AG04450 (cell line): ENCODE measurements at regions of chr13 and their contacts with region 1.

Region 1: GRCh38 chr13:108155185-108156106 is 59.9 kb downstream of the LIG4 start:
- DNase-seq: no peak
- H3K4me3 ChIP-seq: no peak overlapping the region
- H3K27ac ChIP-seq: no peak overlapping the region
- H3K27me3 ChIP-seq: no peaks in the 10 kb centered on the region
- CTCF ChIP-seq: peak; percentile 83

Region 2: DNA sequence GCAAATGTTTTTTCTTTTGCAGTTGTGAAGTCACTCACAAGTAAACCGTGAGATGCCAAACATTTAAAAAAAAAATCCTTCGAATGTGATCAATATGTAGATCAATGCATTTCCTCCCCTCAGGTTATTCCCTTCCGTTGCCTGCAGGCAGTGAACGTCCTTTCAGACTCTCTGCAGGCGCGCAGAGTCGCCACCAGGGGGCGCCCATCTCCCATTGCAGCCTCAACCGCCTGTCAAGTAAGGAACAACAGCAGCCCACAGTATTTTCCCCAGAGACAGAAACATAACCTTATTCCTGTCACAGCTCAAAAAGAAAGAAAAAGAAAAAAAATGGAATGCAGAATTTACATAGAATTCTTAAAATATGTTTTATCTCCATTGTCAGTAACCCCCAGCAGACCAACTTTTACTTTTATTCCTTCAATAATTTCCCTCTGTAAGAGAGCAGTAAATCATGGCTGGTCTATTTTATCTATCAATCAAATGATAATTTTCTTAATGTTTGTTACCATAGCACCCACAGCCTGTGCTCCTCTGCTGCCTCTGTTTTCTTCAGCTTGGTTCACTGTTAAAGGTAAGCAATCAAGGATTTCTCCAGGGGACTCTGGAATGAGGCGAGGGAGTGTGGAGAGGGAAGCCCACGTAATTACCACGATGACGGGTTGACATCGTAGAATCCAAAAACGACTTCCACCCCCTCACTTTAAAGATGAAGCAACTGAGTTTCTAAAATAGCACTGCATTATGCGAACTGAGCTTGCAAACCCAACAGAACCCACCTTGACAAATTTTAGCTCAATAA is 949.9 kb before region 1 on chr13:
- CTCF ChIA-PET with region 1: interaction called, 48 read pairs
- POLR2A ChIA-PET with region 1: no interaction called
- DNase-seq: peak; percentile 26
- H3K4me3 ChIP-seq: no peak overlapping the region
- H3K27ac ChIP-seq: no peak overlapping the region
- H3K27me3 ChIP-seq: no peaks in the 10 kb centered on the region
- CTCF ChIP-seq: peak; percentile 99

Region 3: DNA sequence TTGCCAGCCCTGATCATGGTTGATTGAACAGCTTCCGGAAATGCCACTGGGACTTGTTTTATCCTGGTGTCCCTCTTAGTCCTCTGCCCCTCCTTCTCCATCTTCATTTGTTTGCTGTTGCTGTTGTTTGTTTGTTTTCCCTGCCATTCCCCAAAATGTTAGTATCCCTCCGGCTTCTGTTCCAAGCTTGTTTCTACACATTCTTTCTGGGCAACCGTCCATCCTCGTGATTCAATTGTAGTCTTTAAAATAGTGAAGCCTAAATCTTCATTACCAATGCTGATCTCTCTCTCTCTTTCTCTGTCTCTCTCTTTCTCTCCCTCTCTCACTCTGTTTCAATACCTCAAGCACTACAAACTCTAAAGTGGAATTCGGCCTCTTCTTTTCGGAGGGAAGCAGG is 938.2 kb before region 1 on chr13:
- CTCF ChIA-PET with region 1: interaction called, 11 read pairs
- POLR2A ChIA-PET with region 1: no interaction called
- DNase-seq: no peak
- H3K4me3 ChIP-seq: no peak overlapping the region
- H3K27ac ChIP-seq: no peak overlapping the region
- H3K27me3 ChIP-seq: no peaks in the 10 kb centered on the region
- CTCF ChIP-seq: no peak

Region 4: DNA sequence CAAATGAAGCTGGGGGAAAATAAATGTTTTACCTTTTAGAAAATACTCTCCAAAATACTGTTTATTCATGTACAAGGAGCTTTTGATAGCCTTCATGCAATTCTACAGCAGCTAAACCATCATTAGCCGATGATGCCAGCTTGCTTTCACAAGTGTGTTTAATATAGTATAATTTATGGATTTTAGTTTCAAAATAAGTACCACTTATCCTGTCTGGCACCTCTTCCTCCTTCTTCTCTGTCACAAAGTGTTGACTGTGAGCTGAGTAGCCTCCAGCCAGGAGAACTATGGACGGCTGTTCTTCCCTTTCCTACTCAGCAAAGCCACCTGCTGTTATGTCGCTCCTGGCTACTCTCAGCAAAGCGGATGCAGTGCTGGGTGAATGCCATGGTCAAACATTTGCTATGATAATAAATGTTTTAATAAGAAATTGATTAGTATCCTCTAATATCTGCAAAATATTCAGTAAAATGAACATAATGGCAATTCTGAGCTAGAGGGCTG is 178.3 kb before region 1 on chr13:
- CTCF ChIA-PET with region 1: no interaction called
- POLR2A ChIA-PET with region 1: no interaction called
- DNase-seq: no peak
- H3K4me3 ChIP-seq: no peak overlapping the region
- H3K27ac ChIP-seq: no peak overlapping the region
- H3K27me3 ChIP-seq: no peaks in the 10 kb centered on the region
- CTCF ChIP-seq: no peak

Region 5: GRCh38 chr13:108020027-108020426 is 135.4 kb before region 1 on chr13:
- CTCF ChIA-PET with region 1: no interaction called
- POLR2A ChIA-PET with region 1: no interaction called
- DNase-seq: no peak
- H3K4me3 ChIP-seq: no peak overlapping the region
- H3K27ac ChIP-seq: no peak overlapping the region
- H3K27me3 ChIP-seq: no peaks in the 10 kb centered on the region
- CTCF ChIP-seq: no peak

Region 6: DNA sequence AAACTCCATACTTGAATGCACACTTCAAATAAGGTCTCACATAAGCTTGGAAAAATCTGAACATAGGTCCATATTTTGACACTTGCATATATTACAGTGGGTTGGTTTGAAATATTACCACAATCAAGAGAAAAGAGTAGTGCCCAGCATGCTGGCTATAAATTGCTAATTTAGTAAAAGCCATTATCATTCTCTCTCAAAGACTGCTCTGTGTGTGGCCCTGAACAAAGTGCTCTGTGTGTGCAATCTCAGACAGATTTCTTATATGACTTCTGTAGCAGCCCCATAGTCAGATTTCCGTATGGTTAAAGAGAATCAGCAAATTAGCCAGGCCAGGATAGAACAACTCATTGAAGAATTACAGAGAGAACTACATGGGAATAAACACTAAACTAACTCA is 18.3 kb before region 1 on chr13:
- CTCF ChIA-PET with region 1: interaction called, 25 read pairs
- POLR2A ChIA-PET with region 1: no interaction called
- DNase-seq: no peak
- H3K4me3 ChIP-seq: no peak overlapping the region
- H3K27ac ChIP-seq: no peak overlapping the region
- H3K27me3 ChIP-seq: no peaks in the 10 kb centered on the region
- CTCF ChIP-seq: no peak

Region 7: GRCh38 chr13:108176685-108177274 is 21.3 kb after region 1 on chr13:
- CTCF ChIA-PET with region 1: interaction called, 10 read pairs
- POLR2A ChIA-PET with region 1: no interaction called
- DNase-seq: no peak
- H3K4me3 ChIP-seq: no peak overlapping the region
- H3K27ac ChIP-seq: no peak overlapping the region
- H3K27me3 ChIP-seq: no peaks in the 10 kb centered on the region
- CTCF ChIP-seq: peak; percentile 51

Region 8: GRCh38 chr13:109180905-109181425 is 1025.5 kb after region 1 on chr13:
- CTCF ChIA-PET with region 1: no interaction called
- POLR2A ChIA-PET with region 1: no interaction called
- DNase-seq: peak; percentile 70
- H3K4me3 ChIP-seq: no peak overlapping the region
- H3K27ac ChIP-seq: peak overlapping the region; percentile 54
- H3K27me3 ChIP-seq: no peaks in the 10 kb centered on the region
- CTCF ChIP-seq: no peak